Heart left ventricle (tissue), 16 donors: ENCODE measurements at regions of chr7 and their contacts with region 1.

Region 1: DNA sequence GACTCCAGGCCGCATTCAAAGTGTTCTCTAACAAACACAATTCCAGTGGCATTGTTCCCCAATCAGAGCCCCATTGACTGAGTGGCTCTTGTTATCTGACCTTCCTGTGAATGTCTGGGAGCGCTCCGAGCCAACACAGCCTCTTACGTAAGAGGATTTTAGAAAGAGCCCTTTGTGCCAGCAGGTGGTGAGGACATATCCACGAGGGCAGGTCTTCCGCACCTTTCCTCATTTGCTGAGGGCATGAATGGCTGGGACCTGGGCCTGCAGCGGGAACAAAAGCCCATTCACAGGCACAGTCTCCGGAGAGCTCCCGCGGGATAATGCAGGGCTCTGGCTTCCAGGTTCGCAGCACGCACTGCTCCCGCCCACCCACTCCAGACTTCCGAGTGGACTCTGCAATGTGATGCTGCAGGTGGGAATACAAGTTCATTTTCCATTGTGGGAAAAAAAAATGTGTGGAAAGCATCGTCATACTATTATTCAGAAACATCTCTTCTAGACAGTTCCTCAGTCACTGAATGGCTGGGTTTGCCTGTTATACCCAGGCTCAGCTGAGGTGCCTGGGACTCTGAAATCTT is 295.0 kb upstream of the IGFBP3 start:
- DNase-seq: peak in 4 of 5 donors; percentile 56 to 73 (median 68)
- ATAC-seq: peak; percentile 84 to 89 (median 86)
- H3K4me3 ChIP-seq: no peak overlapping the region
- H3K27ac ChIP-seq: peak overlapping the region in 7 of 12 donors; percentile 50 to 75 (median 66)
- H3K4me1 ChIP-seq: peaks cover 0 to 30% (median 15%) of the 10 kb centered on the region in 12 donors
- H3K27me3 ChIP-seq: no peaks in the 10 kb centered on the region
- CTCF ChIP-seq: no peak
- POLR2A ChIP-seq: no peak

Region 2: DNA sequence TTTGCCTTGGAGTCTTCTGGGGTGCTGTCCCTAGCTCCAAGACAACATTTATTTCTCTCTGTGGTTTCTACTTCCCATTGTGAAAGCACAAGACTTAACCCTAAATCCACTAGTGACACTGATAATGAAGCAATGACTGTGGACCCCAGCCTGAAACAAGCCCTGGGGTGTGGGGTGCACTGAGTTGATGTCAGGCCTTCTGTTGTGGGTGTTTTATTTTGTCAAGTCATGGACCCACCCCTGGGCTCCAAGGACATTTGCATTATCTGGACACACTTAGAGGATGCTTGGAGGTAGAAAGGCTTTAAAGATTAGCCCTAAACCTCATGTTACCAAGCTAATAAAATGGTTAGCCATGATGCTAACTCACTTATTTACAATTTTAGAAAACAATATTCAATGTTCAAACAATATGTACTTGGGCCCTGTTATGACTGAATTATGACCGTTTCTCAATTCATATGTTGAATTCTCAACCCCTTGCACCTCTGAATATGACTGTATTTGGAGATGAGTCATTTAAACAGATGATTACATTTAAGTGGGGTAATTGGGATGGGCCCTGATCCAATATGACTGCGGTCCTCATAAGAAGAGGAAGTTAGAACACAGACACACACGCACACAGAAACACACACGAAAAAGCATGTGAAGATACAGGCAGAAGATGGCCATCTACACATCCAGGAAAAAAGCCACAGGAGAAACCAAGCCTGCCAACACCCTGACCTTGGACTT is 157.8 kb before region 1 on chr7:
- intact Hi-C with region 1: loop called in 1 of 10 experiments (anchors 10 kb)
- DNase-seq: no peak
- ATAC-seq: no peak
- H3K4me3 ChIP-seq: no peak overlapping the region
- H3K27ac ChIP-seq: no peak overlapping the region
- H3K4me1 ChIP-seq: peaks cover 0 to 16% (median 10%) of the 10 kb centered on the region in 12 donors
- H3K27me3 ChIP-seq: no peaks in the 10 kb centered on the region
- CTCF ChIP-seq: no peak
- POLR2A ChIP-seq: no peak